Dorsolateral prefrontal cortex (tissue), 120 donors: ENCODE measurements at regions of chr3 and their contacts with region 1.

Region 1: DNA sequence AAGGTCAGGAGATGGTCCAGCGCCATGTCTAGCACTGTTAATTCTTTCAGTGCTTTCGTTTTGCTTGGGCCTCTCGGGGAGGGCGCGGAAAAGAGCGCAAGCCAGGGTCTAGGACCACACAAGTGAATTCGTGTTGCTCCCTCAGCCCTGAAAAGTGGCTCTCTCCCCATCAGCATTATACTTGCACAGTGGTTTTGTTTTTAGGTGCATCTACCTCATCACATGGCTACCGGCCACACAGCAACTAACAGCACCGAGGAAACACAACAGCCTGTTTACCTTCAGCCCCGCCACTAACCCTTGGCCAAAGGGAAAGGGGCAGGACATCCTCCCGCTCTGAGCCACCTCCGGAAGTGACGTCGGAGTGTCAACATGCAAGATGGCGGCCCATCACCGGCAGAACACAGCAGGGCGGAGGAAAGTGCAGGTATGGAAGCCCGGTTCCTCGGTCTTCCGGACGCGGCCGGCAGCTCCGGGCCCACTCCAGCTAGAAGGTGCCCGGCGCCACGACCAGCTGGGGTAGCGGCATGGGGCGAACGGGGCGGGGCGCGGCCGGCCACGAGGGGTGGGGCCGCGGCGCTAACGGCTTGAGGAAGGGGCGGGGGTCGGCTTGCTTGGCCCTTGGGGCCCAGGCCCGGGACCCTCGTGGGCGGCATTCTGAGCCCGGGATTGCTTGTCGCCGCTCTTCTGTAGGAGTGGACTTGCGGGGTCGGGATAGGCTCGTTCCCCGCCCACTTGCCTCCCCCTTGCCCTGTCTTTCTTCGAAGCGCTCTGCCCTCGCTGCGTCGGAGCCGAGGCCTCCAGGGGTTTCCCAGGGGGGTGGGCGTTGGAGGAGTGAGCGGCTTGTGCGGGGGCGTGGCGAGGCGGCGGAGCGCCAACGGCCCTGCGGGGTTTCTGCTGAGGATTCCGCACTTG is at the starts of genes SCN11A and WDR48:
- DNase-seq: peak; percentile 89 to 98 (median 96)
- H3K4me3 ChIP-seq: peak within 1 kb of the TSS; percentile 65 to 100 (median 97)
- H3K27ac ChIP-seq: peak within 1 kb of the TSS; percentile 32 to 98 (median 91)
- H3K27me3 ChIP-seq: no peaks in the 10 kb centered on the region
- CTCF ChIP-seq: peak in 18 of 56 donors; percentile 2 to 47 (median 23)
- total RNA-seq, gene SCN11A: 0.19 to 1.4 (median 0.68) TPM
- total RNA-seq, gene WDR48: 45.0 to 93.1 (median 69.8) TPM

Region 2: DNA sequence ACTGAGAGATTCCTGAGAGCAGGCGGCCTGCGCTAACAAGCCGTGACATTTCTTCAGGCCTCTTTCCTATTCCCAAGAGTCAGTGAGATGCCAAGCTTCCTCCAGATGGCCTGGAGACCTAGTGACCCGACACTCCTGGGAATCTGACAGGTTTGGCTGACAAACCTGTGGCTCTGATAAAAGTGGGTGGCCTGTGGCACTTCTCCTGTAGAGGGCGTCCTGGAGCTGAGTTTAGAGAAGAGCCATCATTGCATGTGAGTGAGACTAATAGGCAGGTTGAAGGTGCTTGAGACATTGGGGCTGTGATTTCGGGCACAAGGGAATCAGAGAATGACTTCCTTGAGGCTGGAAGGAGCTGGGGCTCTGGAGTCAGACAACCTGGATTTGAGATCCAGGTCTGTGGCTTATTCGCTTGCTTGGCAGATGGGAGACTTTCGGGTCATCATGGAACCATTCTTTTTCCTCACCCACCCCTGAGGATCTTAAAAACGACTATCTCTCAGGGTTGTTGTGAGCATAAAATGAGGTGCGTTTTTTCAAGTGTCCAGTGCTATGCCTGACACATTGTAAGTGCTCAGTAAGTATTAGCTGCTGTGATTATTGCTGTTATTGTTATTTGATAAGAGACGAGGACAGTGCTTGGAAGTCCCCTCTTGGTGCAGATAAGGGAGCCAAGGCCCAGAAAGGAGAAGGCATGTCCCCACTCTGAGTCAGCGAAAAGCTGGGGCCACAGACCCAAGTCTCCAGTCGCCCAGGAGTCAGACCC is 313.1 kb before region 1 on chr3:
- intact Hi-C with region 1: no loop called
- DNase-seq: no peak
- H3K4me3 ChIP-seq: no peak overlapping the region
- H3K27ac ChIP-seq: no peak overlapping the region
- H3K27me3 ChIP-seq: no peaks in the 10 kb centered on the region
- CTCF ChIP-seq: peak in 29 of 56 donors; percentile 13 to 49 (median 25)

Region 3: DNA sequence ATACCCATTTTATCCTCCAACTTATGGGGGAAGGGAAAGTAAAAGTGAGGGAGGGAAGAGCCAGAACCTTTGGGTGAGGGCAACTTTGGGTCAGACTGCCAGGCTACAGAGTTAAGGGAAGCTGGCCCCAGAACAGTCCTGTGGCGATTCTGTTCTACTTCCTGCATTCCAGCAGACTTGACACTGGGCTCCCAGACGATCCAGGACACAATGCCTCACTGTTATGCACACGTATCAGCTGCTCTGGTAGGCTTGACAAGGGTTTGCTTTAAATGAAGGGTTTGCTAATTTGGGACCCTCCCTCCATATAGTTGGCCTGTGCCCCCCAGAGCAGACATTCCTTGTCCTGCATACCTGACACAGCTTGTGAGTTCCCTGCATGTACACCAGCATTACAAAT is 44.9 kb after region 1 on chr3:
- intact Hi-C with region 1: loop called in 1 of 2 experiments (anchors 5 kb)
- DNase-seq: peak in 1 of 10 donors; percentile 45
- H3K4me3 ChIP-seq: no peak overlapping the region
- H3K27ac ChIP-seq: peak overlapping the region in 55 of 59 donors; percentile 4 to 86 (median 69)
- H3K27me3 ChIP-seq: no peaks in the 10 kb centered on the region
- CTCF ChIP-seq: no peak